CD8-positive, alpha-beta memory T cell (primary cell): ENCODE measurements at regions of chr3 and their contacts with region 1.

Region 1: DNA sequence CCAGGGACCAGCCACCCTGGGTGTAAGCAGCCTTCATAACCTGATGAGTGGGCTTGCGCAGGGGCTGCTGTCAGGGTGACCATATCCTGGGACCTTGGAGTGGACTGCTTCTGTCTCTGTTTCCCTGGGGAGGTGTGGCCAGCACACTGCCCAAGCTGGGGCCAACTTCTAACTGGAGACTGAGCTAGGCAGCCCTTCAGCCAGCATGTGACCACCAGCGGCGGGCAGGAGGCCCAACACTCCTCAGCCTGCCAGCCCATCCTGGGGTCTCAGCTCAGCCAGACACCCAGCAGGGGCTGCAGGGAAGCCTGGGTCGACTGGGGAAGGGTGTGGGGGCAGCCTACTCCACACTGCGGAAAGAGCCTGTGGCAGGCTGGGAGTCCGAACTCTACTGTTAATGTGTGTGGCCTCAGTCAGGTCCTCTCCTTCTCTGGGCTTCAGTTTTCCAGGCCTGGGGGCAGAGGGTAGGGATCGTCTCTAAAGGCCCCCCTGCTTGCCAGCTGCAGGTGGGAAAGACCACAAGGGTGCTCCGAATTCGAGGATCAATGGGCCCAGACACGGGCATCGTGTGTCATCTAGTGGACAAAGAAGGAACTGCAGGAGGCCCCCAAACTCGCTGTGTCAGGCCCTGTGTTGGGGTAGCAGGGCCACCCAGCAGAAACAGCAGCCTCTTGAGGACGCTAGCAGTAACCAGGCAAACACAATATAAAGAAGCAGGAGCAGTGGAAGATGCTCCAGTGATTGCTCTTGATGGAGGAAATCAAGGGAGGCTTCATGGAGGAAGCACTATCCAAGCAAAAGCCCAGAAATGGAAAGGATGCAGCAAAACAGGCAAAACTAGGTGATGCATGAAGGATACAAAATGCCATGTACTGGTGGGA is 2.0 kb upstream of the SEMA3G start:
- DNase-seq: peak; percentile 59 to 79 (median 65)
- H3K4me3 ChIP-seq: no peak overlapping the region
- H3K4me3 Mint-ChIP-seq: peak overlapping the region in 1 of 7 donors; percentile 15
- H3K27ac ChIP-seq: no peak overlapping the region
- H3K27ac Mint-ChIP-seq: peak overlapping the region in 4 of 8 donors; percentile 0 to 92 (median 29)
- H3K4me1 ChIP-seq: peaks cover 12% of the 10 kb centered on the region
- H3K4me1 Mint-ChIP-seq: peaks cover 7 to 10% (median 9%) of the 10 kb centered on the region in 3 donors
- H3K27me3 ChIP-seq: no peaks in the 10 kb centered on the region
- H3K27me3 Mint-ChIP-seq: peaks cover 0 to 1% of the 10 kb centered on the region in 2 donors

Region 2: DNA sequence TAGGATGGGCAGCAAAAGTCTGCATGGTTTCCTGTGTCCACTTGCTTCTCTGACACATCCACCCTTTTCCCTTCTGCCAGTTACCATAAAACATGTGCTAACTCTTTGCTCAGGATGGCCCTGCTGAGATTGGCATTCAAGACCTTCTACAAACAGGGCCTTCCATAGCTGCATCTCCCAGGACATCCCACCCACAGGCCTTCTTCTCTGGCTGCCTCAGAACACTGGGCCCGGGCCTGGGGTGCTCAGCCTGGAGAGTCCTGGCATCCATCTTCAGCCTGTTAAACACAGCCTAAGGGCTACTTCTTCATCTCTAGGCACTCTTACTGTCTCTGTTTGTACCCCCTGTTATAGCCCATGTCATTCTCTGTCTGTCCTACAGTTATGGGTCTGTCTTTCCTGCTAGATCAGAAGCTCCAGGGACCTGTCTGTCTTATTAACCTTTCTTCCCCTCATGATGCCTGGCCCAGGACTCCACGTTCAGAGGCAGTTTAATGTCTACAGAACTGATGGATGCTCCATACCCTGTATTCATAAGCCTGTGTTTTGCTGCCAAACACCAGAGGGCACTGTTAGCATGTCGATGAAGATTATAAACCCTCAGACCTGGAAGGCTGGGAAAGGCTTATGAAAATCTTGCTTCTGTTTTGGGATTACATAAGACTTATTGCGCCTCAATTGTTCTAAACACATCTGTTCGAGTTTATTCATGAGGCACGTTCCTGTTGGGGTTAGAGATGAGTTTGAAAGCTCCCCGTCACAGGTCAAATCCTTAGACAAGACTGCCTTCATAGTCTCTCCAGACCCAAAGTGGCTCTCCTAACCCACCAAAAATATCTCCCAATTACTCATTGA is 18.5 kb before region 1 on chr3:
- CTCF ChIA-PET with region 1: interaction called, 20 read pairs
- POLR2A ChIA-PET with region 1: interaction called, 4 read pairs
- DNase-seq: peak in 2 of 5 donors; percentile 22 to 23
- H3K4me3 ChIP-seq: no peak overlapping the region
- H3K4me3 Mint-ChIP-seq: no peak overlapping the region
- H3K27ac ChIP-seq: no peak overlapping the region
- H3K27ac Mint-ChIP-seq: peak overlapping the region in 1 of 8 donors; percentile 52
- H3K4me1 ChIP-seq: no peaks in the 10 kb centered on the region
- H3K4me1 Mint-ChIP-seq: peaks cover 3 to 5% (median 5%) of the 10 kb centered on the region in 3 donors
- H3K27me3 ChIP-seq: no peaks in the 10 kb centered on the region
- H3K27me3 Mint-ChIP-seq: peaks cover 0 to 1% of the 10 kb centered on the region in 2 donors